ENCODE measurements at regions of chr16 and their contacts with region 1.

Region 1: DNA sequence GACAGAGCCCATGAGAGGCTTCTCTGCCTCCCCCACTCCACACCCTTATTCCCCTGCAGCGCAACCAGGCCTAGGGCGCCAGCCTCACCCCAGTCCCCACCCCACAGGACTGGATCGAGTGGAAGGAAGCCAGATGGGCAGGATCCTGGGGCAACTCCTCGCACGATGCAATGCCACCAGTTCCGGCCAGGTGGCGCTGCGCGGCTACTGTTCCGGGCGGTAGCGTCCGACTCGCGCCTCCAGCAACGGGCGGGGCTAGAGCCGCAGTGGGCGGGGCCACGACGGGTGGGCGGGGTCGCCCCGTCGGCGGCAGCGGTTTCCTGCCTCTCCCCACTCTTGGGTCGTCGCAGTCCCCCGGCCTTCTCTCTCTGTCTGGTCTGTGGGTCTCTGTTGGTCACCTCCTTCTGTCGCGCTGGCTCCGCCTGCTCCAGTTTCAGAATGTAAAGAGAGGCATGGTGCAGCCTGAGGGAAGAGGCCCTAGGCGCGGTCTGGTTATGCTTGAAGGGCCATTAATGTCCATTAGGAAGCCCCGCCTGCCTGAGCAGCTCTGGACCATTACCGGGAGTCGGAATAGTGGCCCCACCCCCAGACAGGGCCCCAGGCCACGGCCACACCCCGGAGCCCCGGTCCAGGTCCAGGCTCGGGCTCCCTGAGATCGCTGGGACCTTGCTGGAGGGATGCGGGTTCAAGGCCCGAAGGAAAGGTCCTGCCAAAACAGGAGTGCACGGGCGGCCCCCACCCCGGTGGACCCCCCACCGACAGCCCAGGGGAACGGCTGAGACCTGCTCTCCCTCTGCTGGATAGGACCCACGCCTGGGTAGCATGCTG is 3.4 kb upstream of the NHERF2 start:
- DNase-seq: peak; percentile 92
- H3K4me3 ChIP-seq: peak overlapping the region in 1 of 2 donors; percentile 23
- H3K27ac ChIP-seq: peak overlapping the region; percentile 67 to 71
- H3K4me1 ChIP-seq: peaks cover 10% of the 10 kb centered on the region
- H3K27me3 ChIP-seq: peaks cover 5% of the 10 kb centered on the region
- CTCF ChIP-seq: peak; percentile 97 to 100 (median 99)
- POLR2A ChIP-seq: peak; percentile 58

Region 2: GRCh38 chr16:1863681-1864460 is 159.4 kb before region 1 on chr16:
- intact Hi-C with region 1: no loop called
- DNase-seq: no peak
- H3K4me3 ChIP-seq: no peak overlapping the region
- H3K27ac ChIP-seq: no peak overlapping the region
- H3K4me1 ChIP-seq: no peaks in the 10 kb centered on the region
- H3K27me3 ChIP-seq: no peaks in the 10 kb centered on the region
- CTCF ChIP-seq: peak; percentile 15 to 75 (median 48)
- POLR2A ChIP-seq: no peak

Region 3: GRCh38 chr16:2071454-2072202 is 48.3 kb after region 1 on chr16:
- intact Hi-C with region 1: no loop called
- DNase-seq: no peak
- H3K4me3 ChIP-seq: no peak overlapping the region
- H3K27ac ChIP-seq: no peak overlapping the region
- H3K4me1 ChIP-seq: no peaks in the 10 kb centered on the region
- H3K27me3 ChIP-seq: no peaks in the 10 kb centered on the region
- CTCF ChIP-seq: no peak
- POLR2A ChIP-seq: no peak

Region 4: DNA sequence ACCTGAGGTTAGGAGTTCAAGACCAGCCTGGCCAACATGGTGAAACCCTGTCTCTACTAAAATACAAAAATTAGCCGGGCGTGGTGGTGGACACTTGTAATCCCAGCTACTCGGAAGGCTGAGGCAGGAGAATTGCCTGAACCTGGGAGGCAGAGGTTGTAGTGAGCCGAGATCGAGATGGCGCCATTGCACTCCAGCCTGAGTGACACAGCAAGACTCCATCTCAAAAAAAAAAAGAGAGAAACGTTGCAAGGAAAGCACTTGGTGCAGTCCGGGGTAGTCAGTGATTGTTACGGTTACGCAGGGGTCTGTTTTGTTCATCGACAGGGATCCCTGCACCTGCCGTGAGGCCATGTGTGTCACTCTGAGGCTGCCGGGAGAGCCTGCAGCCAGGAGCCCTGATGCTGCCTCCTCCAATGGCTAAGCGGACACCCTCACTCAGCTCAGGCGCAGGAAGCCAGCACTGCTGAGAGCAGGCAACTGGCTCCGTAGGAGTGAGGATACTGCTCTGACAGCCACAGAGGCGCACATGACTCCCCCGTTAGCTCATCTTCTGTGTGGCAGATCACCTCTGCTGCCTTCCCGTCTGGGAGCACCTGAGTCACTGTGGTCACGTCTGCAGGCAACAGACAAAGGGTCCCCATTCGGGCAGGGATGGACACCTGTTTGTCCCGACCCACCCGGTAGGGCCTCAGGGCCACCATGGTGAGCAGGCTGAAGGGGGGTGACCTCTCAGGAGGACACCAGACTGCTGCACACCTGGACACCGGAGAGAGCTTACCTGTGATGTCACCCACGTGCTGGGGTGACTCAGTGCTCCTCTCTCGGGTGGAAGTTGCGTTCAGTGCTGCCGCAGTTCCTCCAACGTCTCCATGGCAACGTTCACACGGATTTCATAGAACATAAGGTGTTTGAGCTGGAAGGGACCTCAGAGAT is 119.9 kb after region 1 on chr16:
- intact Hi-C with region 1: loop called (anchors 2 kb)
- DNase-seq: no peak
- H3K4me3 ChIP-seq: no peak overlapping the region
- H3K27ac ChIP-seq: no peak overlapping the region
- H3K4me1 ChIP-seq: peaks cover 5% of the 10 kb centered on the region
- H3K27me3 ChIP-seq: no peaks in the 10 kb centered on the region
- CTCF ChIP-seq: no peak
- POLR2A ChIP-seq: no peak

Region 5: GRCh38 chr16:2244245-2244691 is 221.0 kb after region 1 on chr16:
- intact Hi-C with region 1: loop called (anchors 10 kb)
- DNase-seq: no peak
- H3K4me3 ChIP-seq: no peak overlapping the region
- H3K27ac ChIP-seq: no peak overlapping the region
- H3K4me1 ChIP-seq: no peaks in the 10 kb centered on the region
- H3K27me3 ChIP-seq: no peaks in the 10 kb centered on the region
- CTCF ChIP-seq: no peak
- POLR2A ChIP-seq: no peak